Cardiac septum (tissue), 1 donor: ENCODE measurements at regions of chr1 and their contacts with region 1.

Region 1: GRCh38 chr1:108746372-108747205 is at the start of gene STXBP3:
- DNase-seq: peak; percentile 100
- total RNA-seq, gene STXBP3: 30.3 TPM

Region 2: GRCh38 chr1:108541861-108542260 is 204.7 kb before region 1 on chr1:
- intact Hi-C with region 1: no loop called
- DNase-seq: no peak

Region 3: GRCh38 chr1:108691942-108692723 is 54.5 kb before region 1 on chr1 and contains the start of gene PRPF38B:
- intact Hi-C with region 1: loop called (anchors 5 kb)
- DNase-seq: peak; percentile 99
- total RNA-seq, gene PRPF38B: 16.4 TPM

Region 4: GRCh38 chr1:109025694-109026093 is 279.1 kb after region 1 on chr1:
- intact Hi-C with region 1: no loop called
- DNase-seq: no peak